Activated CD4-positive, alpha-beta memory T cell treated with anti-CD3 and anti-CD28 coated beads, Interleukin-2, amount 10 ng/mL, durations not matched to agents 7 days and 5 days (primary cell): ENCODE measurements at regions of chr9 and their contacts with region 1.

Region 1: GRCh38 chr9:37119907-37120842 is at the start of gene ZCCHC7:
- DNase-seq: peak; percentile 97
- H3K4me3 Mint-ChIP-seq: peak within 1 kb of the TSS; percentile 98
- H3K27ac Mint-ChIP-seq: peak within 1 kb of the TSS; percentile 94
- H3K4me1 Mint-ChIP-seq: peaks cover 27% of the 10 kb centered on the region
- H3K27me3 Mint-ChIP-seq: no peaks in the 10 kb centered on the region
- total RNA-seq, gene ZCCHC7: 20.9 to 21.9 TPM

Region 2: DNA sequence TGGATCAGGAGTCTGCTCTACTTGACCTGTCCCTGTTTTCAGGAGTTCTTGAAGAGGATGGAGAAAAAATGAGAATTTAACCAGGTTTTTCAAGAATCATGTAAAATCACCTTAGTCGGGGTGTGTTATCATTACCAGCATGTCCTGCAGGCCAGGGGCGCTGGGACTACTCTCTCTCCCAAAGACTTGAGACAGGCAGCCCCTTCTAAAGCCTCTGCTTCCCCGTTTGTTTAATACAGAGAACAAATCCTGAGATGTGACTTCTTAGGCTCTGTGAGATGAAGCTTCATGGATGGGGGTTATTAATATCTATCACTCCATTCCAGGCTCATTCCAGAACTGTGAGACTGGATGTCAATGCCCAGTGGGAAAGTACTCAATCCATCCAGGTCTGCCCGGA is 89.1 kb before region 1 on chr9:
- CTCF ChIA-PET with region 1: no interaction called
- POLR2A ChIA-PET with region 1: no interaction called
- DNase-seq: no peak
- H3K4me3 Mint-ChIP-seq: no peak overlapping the region
- H3K27ac Mint-ChIP-seq: no peak overlapping the region
- H3K4me1 Mint-ChIP-seq: peaks cover 52% of the 10 kb centered on the region
- H3K27me3 Mint-ChIP-seq: peaks cover 93% of the 10 kb centered on the region

Region 3: DNA sequence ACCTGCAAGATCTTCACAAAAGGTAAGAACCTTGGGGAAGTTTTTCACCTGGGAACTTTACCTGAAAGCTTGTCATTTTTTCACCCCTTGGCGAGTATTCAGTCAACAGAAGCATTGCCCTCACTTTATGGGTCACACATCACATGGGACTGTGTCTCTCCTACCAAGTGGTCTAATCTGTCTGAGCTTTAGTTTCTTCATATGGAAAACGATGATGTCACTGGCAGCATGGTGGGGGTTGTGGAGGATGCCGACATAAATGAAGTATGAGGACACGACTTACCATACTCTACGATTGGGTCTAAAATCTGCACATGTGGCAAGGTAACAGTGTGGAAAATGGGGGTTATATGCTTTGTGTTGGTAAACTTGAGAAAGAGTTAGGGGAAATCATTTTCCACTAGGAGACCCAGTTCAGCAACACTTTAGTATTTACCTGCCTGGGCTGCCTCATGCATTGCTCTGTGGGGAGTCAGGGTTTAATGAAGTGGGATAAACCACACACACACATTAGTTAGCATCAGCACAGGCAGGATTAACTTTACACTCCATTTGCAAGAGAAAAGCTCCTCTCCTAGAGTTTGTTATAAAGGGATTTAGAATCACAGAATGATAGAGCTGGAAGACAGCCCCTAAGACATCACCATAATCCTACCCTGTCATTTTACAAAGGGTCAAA is 66.4 kb before region 1 on chr9:
- CTCF ChIA-PET with region 1: no interaction called
- POLR2A ChIA-PET with region 1: no interaction called
- DNase-seq: no peak
- H3K4me3 Mint-ChIP-seq: no peak overlapping the region
- H3K27ac Mint-ChIP-seq: no peak overlapping the region
- H3K4me1 Mint-ChIP-seq: no peaks in the 10 kb centered on the region
- H3K27me3 Mint-ChIP-seq: peaks cover 56% of the 10 kb centered on the region

Region 4: GRCh38 chr9:37079370-37080164 is 40.6 kb before region 1 on chr9:
- CTCF ChIA-PET with region 1: interaction called, 5 read pairs
- POLR2A ChIA-PET with region 1: interaction called, 59 read pairs
- DNase-seq: peak; percentile 93
- H3K4me3 Mint-ChIP-seq: peak overlapping the region; percentile 94
- H3K27ac Mint-ChIP-seq: peak overlapping the region; percentile 80
- H3K4me1 Mint-ChIP-seq: peaks cover 45% of the 10 kb centered on the region
- H3K27me3 Mint-ChIP-seq: peaks cover 8% of the 10 kb centered on the region

Region 5: DNA sequence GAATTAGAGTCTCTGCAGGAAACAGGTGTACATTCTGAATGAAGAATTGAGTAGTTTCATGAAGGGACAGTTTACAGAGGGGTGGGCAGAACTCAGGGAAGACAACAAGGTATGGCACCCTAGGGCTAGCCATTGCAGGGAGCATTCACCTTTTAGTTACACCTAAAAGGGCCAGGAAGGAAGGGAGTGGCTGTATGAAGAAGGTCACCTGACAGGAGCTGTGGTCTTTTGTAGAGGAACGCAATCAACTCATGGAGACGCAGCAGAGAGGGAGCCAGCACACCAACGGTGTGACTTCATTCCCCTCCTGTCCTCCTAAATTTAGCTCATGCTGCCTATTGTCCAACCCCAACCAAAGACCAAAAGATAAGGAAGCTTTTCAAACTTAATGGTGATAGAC is 12.5 kb before region 1 on chr9:
- CTCF ChIA-PET with region 1: no interaction called
- POLR2A ChIA-PET with region 1: interaction called, 14 read pairs
- DNase-seq: peak; percentile 23
- H3K4me3 Mint-ChIP-seq: no peak overlapping the region
- H3K27ac Mint-ChIP-seq: peak overlapping the region; percentile 49
- H3K4me1 Mint-ChIP-seq: peaks cover 24% of the 10 kb centered on the region
- H3K27me3 Mint-ChIP-seq: peaks cover 7% of the 10 kb centered on the region

Region 6: DNA sequence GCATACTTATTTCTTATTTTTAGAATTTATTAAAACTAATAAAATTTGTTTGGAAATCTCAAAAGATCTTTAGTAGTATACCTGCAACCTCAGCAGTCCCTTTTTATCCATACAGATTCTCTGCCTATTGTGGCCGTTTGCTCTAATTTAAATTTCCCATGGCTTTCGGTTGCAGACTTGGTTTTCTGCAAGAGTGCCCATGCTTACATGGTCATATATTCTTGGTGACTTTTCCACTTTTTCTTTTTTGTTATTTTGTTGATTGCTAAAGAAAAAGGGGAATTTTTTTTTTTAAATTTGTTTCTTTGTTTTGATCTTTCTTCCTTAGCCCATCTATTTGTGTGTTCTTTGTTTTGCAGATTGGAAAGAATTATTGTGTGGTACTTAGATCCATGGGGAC is 20.8 kb after region 1 on chr9:
- CTCF ChIA-PET with region 1: interaction called, 6 read pairs
- POLR2A ChIA-PET with region 1: interaction called, 22 read pairs
- DNase-seq: no peak
- H3K4me3 Mint-ChIP-seq: no peak overlapping the region
- H3K27ac Mint-ChIP-seq: no peak overlapping the region
- H3K4me1 Mint-ChIP-seq: peaks cover 9% of the 10 kb centered on the region
- H3K27me3 Mint-ChIP-seq: no peaks in the 10 kb centered on the region

Region 7: GRCh38 chr9:37146410-37146809 is 26.2 kb after region 1 on chr9:
- CTCF ChIA-PET with region 1: interaction called, 6 read pairs
- POLR2A ChIA-PET with region 1: interaction called, 22 read pairs
- DNase-seq: no peak
- H3K4me3 Mint-ChIP-seq: peak overlapping the region; percentile 62
- H3K27ac Mint-ChIP-seq: peak overlapping the region; percentile 76
- H3K4me1 Mint-ChIP-seq: peaks cover 33% of the 10 kb centered on the region
- H3K27me3 Mint-ChIP-seq: no peaks in the 10 kb centered on the region

Region 8: GRCh38 chr9:37187713-37188439 is 67.7 kb after region 1 on chr9:
- CTCF ChIA-PET with region 1: no interaction called
- POLR2A ChIA-PET with region 1: interaction called, 12 read pairs
- DNase-seq: no peak
- H3K4me3 Mint-ChIP-seq: peak overlapping the region; percentile 72
- H3K27ac Mint-ChIP-seq: peak overlapping the region; percentile 90
- H3K4me1 Mint-ChIP-seq: peaks cover 29% of the 10 kb centered on the region
- H3K27me3 Mint-ChIP-seq: no peaks in the 10 kb centered on the region

Region 9: DNA sequence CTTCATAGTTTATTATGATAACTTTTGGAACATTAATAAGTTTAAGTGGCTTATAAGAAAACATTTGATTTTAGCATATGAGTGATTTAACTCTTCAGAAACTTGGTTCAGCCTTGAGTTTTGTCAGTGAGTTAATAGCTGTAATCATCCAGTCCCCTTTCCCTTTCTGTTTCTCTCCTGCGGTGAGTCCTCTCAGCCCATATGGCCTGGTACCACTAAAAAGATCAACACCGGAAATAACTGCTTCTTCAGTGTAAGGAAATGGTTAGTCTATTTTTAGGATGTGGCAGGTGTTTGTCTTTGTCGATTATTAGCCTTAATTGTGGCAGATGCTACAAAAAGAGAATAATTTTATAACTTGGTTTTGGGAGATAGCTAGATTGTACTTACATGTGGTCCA is 182.1 kb after region 1 on chr9:
- CTCF ChIA-PET with region 1: interaction called, 4 read pairs
- POLR2A ChIA-PET with region 1: interaction called, 17 read pairs
- DNase-seq: peak; percentile 68
- H3K4me3 Mint-ChIP-seq: peak overlapping the region; percentile 40
- H3K27ac Mint-ChIP-seq: peak overlapping the region; percentile 85
- H3K4me1 Mint-ChIP-seq: peaks cover 50% of the 10 kb centered on the region
- H3K27me3 Mint-ChIP-seq: no peaks in the 10 kb centered on the region